PC-9 (cell line): ENCODE measurements at regions of chr10 and their contacts with region 1.

Region 1: GRCh38 chr10:24724381-24725228 is 918 bp upstream of the ARHGAP21 start:
- DNase-seq: peak; percentile 83 to 96
- H3K4me3 ChIP-seq: peak overlapping the region; percentile 95
- H3K27ac ChIP-seq: peak overlapping the region; percentile 53
- H3K4me1 ChIP-seq: peaks cover 14% of the 10 kb centered on the region
- H3K27me3 ChIP-seq: no peaks in the 10 kb centered on the region
- CTCF ChIP-seq: no peak; the same call in 1 of the 2 replicates

Region 2: DNA sequence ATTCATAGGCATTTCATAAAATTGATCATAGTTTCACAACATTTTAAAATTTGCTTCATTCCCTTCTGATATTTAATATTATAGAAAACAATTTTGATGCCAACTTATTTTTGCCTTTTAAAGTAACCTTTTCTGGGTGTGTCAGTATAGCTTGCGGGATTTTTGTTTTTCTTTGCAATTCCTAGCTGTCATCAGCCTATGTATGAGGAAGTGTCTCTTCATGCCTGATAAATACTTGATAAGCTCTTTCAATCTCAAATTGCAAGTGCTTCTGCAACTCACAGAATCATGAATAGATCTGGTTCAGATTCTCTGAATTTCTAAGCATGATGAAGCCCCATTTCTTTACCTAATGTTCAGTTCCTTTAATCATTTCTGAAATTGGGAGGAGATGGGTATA is 27.1 kb after region 1 on chr10:
- CTCF ChIA-PET with region 1: no interaction called
- POLR2A ChIA-PET with region 1: no interaction called
- intact Hi-C with region 1: no loop called
- DNase-seq: no peak
- H3K4me3 ChIP-seq: no peak overlapping the region
- H3K27ac ChIP-seq: no peak overlapping the region
- H3K4me1 ChIP-seq: no peaks in the 10 kb centered on the region
- H3K27me3 ChIP-seq: no peaks in the 10 kb centered on the region
- CTCF ChIP-seq: no peak

Region 3: GRCh38 chr10:24762966-24763623 is 38.5 kb after region 1 on chr10:
- CTCF ChIA-PET with region 1: no interaction called
- POLR2A ChIA-PET with region 1: interaction called, 17 read pairs
- intact Hi-C with region 1: loop called (anchors 2 kb)
- DNase-seq: peak; percentile 32 to 64
- H3K4me3 ChIP-seq: no peak overlapping the region
- H3K27ac ChIP-seq: no peak overlapping the region
- H3K4me1 ChIP-seq: peaks cover 18% of the 10 kb centered on the region
- H3K27me3 ChIP-seq: no peaks in the 10 kb centered on the region
- CTCF ChIP-seq: no peak

Region 4: GRCh38 chr10:24894309-24894708 is 169.7 kb after region 1 on chr10:
- CTCF ChIA-PET with region 1: no interaction called
- POLR2A ChIA-PET with region 1: no interaction called
- intact Hi-C with region 1: loop called (anchors 1 kb)
- DNase-seq: peak in 1 of 2 experiments; percentile 67
- H3K4me3 ChIP-seq: no peak overlapping the region
- H3K27ac ChIP-seq: no peak overlapping the region
- H3K4me1 ChIP-seq: peaks cover 58% of the 10 kb centered on the region
- H3K27me3 ChIP-seq: no peaks in the 10 kb centered on the region
- CTCF ChIP-seq: no peak

Region 5: GRCh38 chr10:25016376-25017154 is 292.0 kb after region 1 on chr10 and contains the start of gene THNSL1:
- CTCF ChIA-PET with region 1: no interaction called
- POLR2A ChIA-PET with region 1: interaction called, 3 read pairs
- intact Hi-C with region 1: loop called (anchors 1 kb)
- DNase-seq: peak; percentile 93 to 97
- H3K4me3 ChIP-seq: peak within 1 kb of the TSS; percentile 80
- H3K27ac ChIP-seq: peak within 1 kb of the TSS; percentile 92
- H3K4me1 ChIP-seq: peaks cover 15% of the 10 kb centered on the region; the same call in 1 of the 2 replicates
- H3K27me3 ChIP-seq: no peaks in the 10 kb centered on the region
- CTCF ChIP-seq: no peak
- total RNA-seq, gene THNSL1: 5.6 and 6.8 TPM in 2 replicates

Region 6: GRCh38 chr10:25080880-25081581 is 356.4 kb after region 1 on chr10:
- CTCF ChIA-PET with region 1: no interaction called
- POLR2A ChIA-PET with region 1: no interaction called
- intact Hi-C with region 1: loop called (anchors 5 kb)
- DNase-seq: peak; percentile 59 to 79
- H3K4me3 ChIP-seq: no peak overlapping the region
- H3K27ac ChIP-seq: no peak overlapping the region
- H3K4me1 ChIP-seq: no peaks in the 10 kb centered on the region
- H3K27me3 ChIP-seq: no peaks in the 10 kb centered on the region
- CTCF ChIP-seq: peak; percentile 86